Activated CD4-positive, alpha-beta memory T cell treated with anti-CD3 and anti-CD28 coated beads for 36 hours (primary cell): ENCODE measurements at regions of chr11 and their contacts with region 1.

Region 1: DNA sequence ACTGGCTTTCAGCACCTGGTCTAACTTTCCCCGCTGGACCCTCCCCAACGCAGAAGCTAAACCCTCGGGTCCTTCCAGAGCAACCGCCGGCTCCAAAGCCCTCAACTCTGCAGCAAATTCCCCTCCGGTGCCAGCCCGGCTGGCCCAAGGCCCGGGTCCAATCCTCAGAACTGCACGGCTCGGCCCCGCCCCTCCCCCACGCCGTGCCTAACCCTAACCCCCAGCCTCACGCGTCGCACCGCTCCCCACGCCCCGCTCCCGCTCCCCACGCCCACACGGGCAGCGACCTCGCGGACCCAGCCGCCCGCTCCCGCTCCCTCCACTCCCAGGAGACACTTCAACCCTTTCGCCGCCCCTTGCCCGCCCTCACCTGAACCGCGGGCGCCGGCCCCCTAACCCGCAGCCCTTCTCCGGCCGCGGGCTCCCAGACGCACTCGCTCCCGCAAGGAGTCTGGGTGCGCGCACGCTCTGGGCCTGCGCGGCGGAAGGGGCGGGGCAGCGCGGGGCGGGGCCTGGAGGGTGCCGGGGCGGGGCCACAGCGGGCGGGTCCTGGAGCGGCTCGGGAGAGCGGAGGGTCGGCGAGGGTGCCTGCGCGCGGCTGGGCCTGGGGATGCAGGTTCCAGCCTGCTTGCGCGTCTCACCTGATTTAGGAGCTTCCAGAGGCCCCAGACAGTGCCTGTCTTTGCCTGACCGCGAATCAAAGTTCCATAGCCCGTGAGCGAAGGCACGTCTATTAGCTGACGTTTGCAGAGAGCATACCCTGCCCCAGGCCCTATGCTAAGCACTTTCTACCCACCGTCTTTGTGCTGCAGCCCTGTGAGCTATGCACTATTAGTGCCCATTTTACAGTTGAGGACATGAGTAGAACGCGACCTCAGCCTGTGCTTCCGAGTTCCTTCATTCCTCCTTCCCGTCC is at the start of gene NFRKB:
- DNase-seq: peak; percentile 91
- H3K4me3 Mint-ChIP-seq: peak within 1 kb of the TSS; percentile 88
- H3K27ac Mint-ChIP-seq: peak within 1 kb of the TSS; percentile 76
- H3K4me1 Mint-ChIP-seq: peaks cover 38% of the 10 kb centered on the region
- H3K27me3 Mint-ChIP-seq: no peaks in the 10 kb centered on the region
- total RNA-seq, gene NFRKB: 34.8 to 39.8 TPM

Region 2: DNA sequence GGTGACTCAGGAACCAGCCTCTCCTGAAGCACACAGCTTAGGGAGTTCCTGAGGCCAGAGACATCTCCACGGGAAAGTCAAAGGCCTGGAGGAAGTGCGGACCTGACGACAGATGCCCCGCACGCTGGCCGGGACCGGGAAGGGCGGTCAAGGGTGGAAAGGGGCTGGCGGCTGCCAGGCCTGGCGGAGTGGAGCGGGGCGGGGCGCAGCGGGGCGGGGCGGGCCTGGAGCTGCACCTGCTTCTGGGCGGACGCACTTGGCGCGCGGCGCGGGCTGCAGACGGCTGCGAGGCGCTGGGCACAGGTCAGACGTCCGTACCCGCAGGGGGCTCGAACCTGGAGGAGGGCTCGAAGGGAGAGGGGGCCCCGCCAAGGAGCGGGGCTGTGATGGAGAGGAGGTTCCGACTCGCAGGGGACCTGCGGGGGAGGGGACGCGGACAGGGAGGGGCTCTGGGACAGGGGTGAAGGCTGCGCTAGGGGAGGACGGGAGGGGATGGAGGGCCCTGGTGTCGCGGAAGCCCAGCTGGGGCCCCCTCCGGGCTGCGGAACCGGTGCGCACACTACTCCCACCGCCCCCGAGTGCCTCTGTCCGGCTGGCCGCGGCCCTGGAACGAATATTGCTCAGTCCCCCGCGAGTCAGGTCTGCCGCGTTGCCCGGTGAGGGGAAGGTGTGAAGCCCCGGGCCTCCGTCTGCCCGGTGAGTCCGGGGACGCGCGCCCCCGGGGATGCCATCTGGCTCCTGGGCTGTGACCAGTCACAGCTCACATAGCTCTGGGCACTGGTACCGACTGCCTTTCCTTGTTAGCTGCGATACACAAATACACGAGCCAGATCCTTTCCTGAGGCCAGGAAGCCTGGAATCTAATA is 79.6 kb before region 1 on chr11 and contains the start of gene TMEM45B:
- CTCF ChIA-PET with region 1: no interaction called
- POLR2A ChIA-PET with region 1: no interaction called
- intact Hi-C with region 1: loop called (anchors 5 kb)
- DNase-seq: peak; percentile 62
- H3K4me3 Mint-ChIP-seq: peak within 1 kb of the TSS; percentile 87
- H3K27ac Mint-ChIP-seq: peak within 1 kb of the TSS; percentile 78
- H3K4me1 Mint-ChIP-seq: peaks cover 54% of the 10 kb centered on the region
- H3K27me3 Mint-ChIP-seq: peaks cover 2% of the 10 kb centered on the region
- total RNA-seq, gene TMEM45B: 4.9 to 5.8 TPM

Region 3: DNA sequence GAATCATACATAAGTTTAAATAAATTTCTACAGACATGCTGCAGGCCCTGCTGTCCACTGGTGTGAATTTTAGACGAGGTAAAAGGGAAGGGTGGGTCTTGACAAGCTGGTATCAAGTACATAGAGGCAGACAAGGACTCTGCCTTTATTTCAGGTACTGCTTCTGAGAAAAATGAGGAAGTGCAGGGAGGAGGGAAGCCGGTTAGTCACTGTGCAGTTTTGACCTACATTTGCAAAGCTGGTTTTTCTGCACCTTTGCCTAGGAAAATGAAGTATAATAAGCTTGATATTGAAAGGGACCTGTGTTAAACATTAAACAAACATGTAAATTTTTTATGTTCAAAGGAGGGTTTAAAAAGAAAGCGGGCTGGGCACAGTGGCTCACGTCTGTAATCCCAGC is 55.1 kb before region 1 on chr11:
- CTCF ChIA-PET with region 1: no interaction called
- POLR2A ChIA-PET with region 1: no interaction called
- intact Hi-C with region 1: no loop called
- DNase-seq: no peak
- H3K4me3 Mint-ChIP-seq: no peak overlapping the region
- H3K27ac Mint-ChIP-seq: no peak overlapping the region
- H3K4me1 Mint-ChIP-seq: peaks cover 29% of the 10 kb centered on the region
- H3K27me3 Mint-ChIP-seq: no peaks in the 10 kb centered on the region

Region 4: DNA sequence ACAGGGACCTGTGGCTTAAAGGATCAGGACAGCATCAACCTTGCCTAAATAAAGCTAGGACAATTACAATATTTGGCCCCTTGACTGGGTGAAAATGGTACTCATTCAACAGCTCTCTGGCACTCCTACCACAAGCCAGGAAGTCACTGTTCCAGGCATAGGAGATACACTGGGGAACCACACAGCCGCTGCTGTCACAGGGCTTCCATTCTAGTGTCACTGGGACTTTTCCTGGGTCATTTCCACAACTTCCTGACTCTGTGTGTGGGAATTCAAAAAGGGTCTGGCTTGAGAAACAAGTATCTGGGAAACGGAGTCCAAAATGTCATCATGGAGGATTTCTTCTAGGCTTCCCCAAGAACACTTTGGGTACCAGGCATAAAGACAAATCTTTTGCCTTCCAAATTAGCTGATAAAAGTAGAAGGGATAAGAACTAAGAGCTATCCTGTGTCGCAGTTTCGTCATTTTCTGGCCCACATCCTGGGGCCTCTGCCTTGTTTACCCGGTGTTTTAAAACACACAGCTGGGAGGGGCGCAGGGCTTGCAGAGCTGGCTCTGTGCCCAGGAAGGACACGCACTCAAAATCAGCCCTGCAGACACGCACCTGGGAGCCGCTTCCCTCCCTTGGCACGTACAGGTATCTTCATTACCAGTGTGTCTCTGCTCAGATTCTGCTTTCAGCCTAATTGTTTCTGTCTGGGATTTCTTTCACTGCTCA is 41.7 kb before region 1 on chr11:
- CTCF ChIA-PET with region 1: no interaction called
- POLR2A ChIA-PET with region 1: interaction called, 3 read pairs
- intact Hi-C with region 1: loop called (anchors 2 kb)
- DNase-seq: peak; percentile 82
- H3K4me3 Mint-ChIP-seq: peak overlapping the region; percentile 10
- H3K27ac Mint-ChIP-seq: peak overlapping the region; percentile 86
- H3K4me1 Mint-ChIP-seq: peaks cover 39% of the 10 kb centered on the region
- H3K27me3 Mint-ChIP-seq: no peaks in the 10 kb centered on the region

Region 5: DNA sequence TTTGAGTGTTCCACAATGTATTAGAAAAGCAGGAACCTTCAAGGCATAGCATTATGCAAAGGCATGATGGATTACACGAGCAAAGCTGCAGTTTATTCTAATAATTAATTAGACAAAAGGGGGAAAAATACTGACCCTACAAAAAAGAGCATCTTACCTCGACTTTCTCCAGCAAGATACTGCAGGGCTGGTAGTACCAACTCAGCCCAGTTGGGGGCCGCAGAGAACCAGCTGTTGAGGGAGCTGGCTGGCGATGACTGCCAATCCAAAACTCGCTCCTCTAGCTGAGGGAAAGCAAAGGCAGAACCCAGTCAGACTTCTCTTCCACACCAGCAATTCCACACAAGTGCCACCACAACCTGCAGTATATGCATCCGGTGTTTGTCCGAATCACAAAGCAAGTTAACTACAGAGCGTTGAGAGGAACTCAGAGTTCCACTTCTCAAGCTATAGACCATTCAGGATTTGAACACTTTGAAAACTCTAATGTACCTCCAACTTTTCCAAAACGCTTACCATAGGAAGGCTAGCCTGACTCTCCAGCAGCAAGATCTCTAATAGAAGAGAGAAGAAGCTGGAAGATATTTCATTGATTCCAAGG is 13.7 kb before region 1 on chr11:
- CTCF ChIA-PET with region 1: interaction called, 11 read pairs
- POLR2A ChIA-PET with region 1: no interaction called
- intact Hi-C with region 1: no loop called
- DNase-seq: peak; percentile 55
- H3K4me3 Mint-ChIP-seq: no peak overlapping the region
- H3K27ac Mint-ChIP-seq: no peak overlapping the region
- H3K4me1 Mint-ChIP-seq: no peaks in the 10 kb centered on the region
- H3K27me3 Mint-ChIP-seq: no peaks in the 10 kb centered on the region

Region 6: DNA sequence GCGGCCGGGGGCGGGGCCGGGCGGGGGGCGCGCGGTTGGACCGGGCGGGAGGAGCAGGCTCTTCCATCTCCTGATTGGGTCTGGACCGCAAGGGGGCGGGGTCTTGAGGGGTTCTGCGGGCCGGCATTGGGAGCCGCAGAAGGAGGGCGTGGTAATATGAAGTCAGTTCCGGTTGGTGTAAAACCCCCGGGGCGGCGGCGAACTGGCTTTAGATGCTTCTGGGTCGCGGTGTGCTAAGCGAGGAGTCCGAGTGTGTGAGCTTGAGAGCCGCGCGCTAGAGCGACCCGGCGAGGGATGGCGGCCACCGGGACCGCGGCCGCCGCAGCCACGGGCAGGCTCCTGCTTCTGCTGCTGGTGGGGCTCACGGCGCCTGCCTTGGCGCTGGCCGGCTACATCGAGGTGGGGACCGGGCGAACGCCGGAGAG is 174.3 kb after region 1 on chr11 and contains the start of gene APLP2:
- CTCF ChIA-PET with region 1: no interaction called
- POLR2A ChIA-PET with region 1: no interaction called
- intact Hi-C with region 1: loop called (anchors 2 kb)
- DNase-seq: peak; percentile 98
- H3K4me3 Mint-ChIP-seq: peak within 1 kb of the TSS; percentile 93
- H3K27ac Mint-ChIP-seq: peak within 1 kb of the TSS; percentile 87
- H3K4me1 Mint-ChIP-seq: peaks cover 16% of the 10 kb centered on the region
- H3K27me3 Mint-ChIP-seq: peaks cover 3% of the 10 kb centered on the region
- total RNA-seq, gene APLP2: 49.2 to 53.4 TPM

Region 7: DNA sequence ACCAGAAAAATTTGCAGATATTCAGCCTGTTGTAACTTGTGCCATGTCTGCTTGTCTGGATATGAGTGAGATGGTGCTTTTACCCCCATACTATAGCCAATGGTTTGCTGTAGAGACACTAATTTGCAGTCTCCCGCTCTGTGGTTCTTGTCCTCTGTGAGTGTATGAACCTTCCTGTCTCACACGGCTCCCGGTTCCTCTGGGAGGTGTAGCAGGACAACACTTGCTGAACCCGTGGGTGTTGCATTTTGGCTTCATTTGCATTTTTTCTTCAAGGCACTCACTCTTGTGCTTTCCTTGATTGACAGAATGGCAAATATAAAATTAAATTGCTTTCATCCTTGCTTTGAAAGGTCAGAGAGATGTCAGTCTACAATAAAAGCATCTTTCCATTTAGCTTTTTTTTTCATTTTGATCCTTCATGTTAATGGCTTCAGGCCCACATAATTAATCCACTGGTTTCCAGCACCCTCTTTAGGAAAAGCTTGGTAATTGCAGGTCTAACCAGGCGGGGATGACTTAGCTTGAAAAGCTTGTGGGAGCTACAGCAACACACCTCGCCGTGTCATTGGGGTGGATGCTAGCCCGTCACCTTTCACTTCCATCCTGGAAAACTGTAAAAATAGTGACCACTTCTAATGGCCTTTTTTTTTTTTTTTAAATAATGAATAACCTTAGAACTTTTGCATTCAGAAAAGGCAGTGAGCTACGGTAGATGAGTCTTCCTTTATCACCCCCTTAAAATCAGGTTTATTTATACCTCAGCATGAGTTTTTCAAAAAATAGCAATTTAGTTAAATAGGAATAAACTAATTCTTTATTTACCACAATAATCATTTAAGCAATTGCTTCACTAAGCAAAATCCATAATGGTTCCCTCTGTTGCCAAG is 236.8 kb after region 1 on chr11:
- CTCF ChIA-PET with region 1: interaction called, 15 read pairs
- POLR2A ChIA-PET with region 1: no interaction called
- intact Hi-C with region 1: no loop called
- DNase-seq: peak; percentile 55
- H3K4me3 Mint-ChIP-seq: no peak overlapping the region
- H3K27ac Mint-ChIP-seq: no peak overlapping the region
- H3K4me1 Mint-ChIP-seq: no peaks in the 10 kb centered on the region
- H3K27me3 Mint-ChIP-seq: no peaks in the 10 kb centered on the region

Region 8: GRCh38 chr11:130314750-130315285 is 419.4 kb after region 1 on chr11 and contains the start of gene ZBTB44:
- CTCF ChIA-PET with region 1: no interaction called
- POLR2A ChIA-PET with region 1: no interaction called
- intact Hi-C with region 1: loop called (anchors 1 kb)
- DNase-seq: peak; percentile 94
- H3K4me3 Mint-ChIP-seq: peak within 1 kb of the TSS; percentile 90
- H3K27ac Mint-ChIP-seq: peak within 1 kb of the TSS; percentile 97
- H3K4me1 Mint-ChIP-seq: peaks cover 32% of the 10 kb centered on the region
- H3K27me3 Mint-ChIP-seq: no peaks in the 10 kb centered on the region
- total RNA-seq, gene ZBTB44: 33.3 to 33.4 TPM